Activated naive CD4-positive, alpha-beta T cell treated with anti-CD3 and anti-CD28 coated beads, Interleukin-2, amount 10 ng/mL, durations not matched to agents 7 days and 5 days (primary cell): ENCODE measurements at regions of chr7 and their contacts with region 1.

Region 1: GRCh38 chr7:128415217-128415785 is 5.5 kb upstream of the IMPDH1 start:
- DNase-seq: no peak
- H3K4me3 Mint-ChIP-seq: no peak overlapping the region
- H3K27ac Mint-ChIP-seq: no peak overlapping the region
- H3K4me1 Mint-ChIP-seq: peaks cover 5% of the 10 kb centered on the region
- H3K27me3 Mint-ChIP-seq: peaks cover 54% of the 10 kb centered on the region

Region 2: DNA sequence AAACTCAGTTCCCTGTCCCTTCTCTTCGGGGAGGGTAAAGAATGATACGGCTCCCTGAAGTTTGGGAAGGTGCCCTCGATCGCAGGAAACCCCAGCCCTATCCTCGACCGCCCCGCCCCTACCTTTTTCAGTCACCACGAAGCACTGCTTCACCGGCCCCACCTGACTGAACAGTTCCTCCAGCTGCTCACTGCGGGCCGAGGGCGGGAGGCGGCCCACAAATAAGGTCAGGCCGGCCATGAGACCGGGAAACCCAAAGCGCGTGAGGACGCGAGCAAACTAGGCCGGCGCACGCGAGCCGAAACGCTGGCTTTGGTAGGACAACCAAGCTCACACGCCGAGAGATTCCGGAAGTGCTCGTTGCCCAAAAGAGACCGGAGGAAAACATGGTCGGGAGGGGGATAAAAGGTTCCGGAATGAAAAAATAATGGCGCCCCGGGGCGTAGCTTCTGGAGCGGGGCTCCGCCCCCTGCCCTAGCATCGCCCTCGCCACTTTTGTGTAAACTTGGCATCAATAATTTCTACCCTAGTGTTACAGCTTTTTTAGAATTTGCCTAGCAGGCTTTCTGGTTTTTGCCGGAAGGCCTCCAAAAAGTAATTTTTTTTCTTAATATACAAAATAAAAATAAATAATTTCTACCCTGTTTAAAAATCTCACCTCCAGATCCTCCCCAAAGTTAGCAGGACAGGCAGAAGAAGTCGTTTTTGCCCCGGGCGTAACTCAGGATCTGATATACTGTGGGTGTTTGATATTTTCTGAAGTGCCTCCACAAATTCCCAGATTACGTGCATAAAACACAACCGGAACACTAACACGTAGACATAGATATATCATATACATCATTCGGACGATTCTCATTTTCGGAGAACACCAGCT is 71.5 kb before region 1 on chr7 and contains the start of gene RBM28:
- CTCF ChIA-PET with region 1: interaction called, 10 read pairs
- DNase-seq: peak; percentile 90
- H3K4me3 Mint-ChIP-seq: peak within 1 kb of the TSS; percentile 88
- H3K27ac Mint-ChIP-seq: peak within 1 kb of the TSS; percentile 92
- H3K4me1 Mint-ChIP-seq: peaks cover 26% of the 10 kb centered on the region
- H3K27me3 Mint-ChIP-seq: peaks cover 11% of the 10 kb centered on the region

Region 3: DNA sequence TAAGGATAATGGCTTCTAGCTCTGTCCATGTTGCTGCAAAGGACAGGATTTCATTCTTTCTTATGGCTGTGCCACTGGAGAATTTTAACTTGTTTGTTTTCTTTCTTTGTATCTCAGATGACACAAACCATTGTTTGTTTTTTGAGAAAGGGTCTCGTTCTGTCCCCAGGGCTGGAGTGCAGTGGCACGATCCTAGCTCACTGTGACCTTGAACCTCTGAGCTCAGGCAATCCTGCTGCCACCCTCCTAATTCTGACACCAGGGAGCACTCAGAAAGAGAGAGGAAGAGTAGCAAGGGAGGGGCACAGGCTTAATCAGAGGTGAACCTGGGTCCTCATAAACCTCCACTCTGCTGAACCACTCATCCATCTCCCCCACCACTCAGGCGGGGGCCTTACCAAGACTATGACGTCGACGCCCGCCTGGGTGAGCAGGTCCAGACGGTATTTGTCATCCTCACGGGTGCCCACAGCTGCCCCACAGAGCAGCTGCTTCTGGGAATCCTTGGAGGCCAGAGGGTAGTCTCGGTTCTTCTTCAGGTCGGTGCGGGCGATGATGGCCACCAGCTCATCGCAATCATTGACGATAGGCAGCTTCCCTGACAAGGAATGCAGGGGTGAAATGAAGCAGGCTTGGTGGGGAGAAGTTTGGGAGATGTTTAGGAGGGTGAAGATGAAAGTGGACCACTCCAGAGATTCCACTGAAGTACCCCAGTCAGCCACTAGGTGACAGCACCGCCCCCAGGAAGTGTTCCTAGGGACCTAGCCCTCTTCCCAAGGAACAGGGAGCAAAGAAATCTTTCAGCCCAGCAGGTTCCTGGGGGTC is 17.1 kb before region 1 on chr7:
- CTCF ChIA-PET with region 1: interaction called, 35 read pairs
- DNase-seq: peak; percentile 62
- H3K4me3 Mint-ChIP-seq: no peak overlapping the region
- H3K27ac Mint-ChIP-seq: no peak overlapping the region
- H3K4me1 Mint-ChIP-seq: peaks cover 6% of the 10 kb centered on the region
- H3K27me3 Mint-ChIP-seq: no peaks in the 10 kb centered on the region

Region 4: DNA sequence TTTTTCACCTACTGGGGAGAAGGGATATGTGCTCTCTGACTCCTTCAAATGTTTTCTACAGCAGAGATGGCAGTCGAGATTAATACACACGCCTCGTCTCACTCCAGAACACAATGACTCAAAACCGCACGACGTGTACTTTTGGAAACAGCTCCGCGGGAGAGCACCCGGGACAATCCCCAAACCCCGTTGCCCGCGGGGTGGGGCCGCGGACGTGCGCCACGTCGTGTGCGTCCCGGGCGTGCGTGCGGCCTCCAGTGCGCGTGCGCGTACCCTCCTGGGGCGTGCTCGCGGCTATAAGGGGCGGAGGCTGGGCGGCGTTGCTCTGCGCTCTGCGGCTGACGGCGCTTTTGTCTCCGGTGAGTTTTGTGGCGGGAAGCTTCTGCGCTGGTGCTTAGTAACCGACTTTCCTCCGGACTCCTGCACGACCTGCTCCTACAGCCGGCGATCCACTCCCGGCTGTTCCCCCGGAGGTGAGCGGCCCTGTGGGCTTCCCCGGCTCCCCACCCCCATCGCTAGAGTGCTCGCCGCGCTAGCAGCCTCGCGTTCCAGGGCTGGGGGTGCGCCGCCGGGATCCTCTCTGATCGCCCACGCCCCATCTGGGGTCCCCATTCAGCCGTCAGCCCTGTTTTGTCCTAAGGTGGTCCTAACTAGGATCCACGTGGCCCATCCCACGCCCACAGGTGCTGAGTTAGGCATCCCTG is 40.4 kb after region 1 on chr7 and contains the start of gene HILPDA:
- CTCF ChIA-PET with region 1: interaction called, 34 read pairs
- DNase-seq: peak; percentile 95
- H3K4me3 Mint-ChIP-seq: peak within 1 kb of the TSS; percentile 88
- H3K27ac Mint-ChIP-seq: peak within 1 kb of the TSS; percentile 96
- H3K4me1 Mint-ChIP-seq: peaks cover 57% of the 10 kb centered on the region
- H3K27me3 Mint-ChIP-seq: peaks cover 35% of the 10 kb centered on the region